Activated CD4-positive, alpha-beta memory T cell treated with anti-CD3 and anti-CD28 coated beads for 36 hours (primary cell): ENCODE measurements at regions of chr5 and their contacts with region 1.

Region 1: GRCh38 chr5:66144074-66144833 is at the start of gene SREK1:
- DNase-seq: peak; percentile 92
- H3K4me3 Mint-ChIP-seq: peak within 1 kb of the TSS; percentile 93
- H3K27ac Mint-ChIP-seq: peak within 1 kb of the TSS; percentile 98
- H3K4me1 Mint-ChIP-seq: peaks cover 51% of the 10 kb centered on the region
- H3K27me3 Mint-ChIP-seq: no peaks in the 10 kb centered on the region
- total RNA-seq, gene SREK1: 50.9 to 54.1 TPM

Region 2: DNA sequence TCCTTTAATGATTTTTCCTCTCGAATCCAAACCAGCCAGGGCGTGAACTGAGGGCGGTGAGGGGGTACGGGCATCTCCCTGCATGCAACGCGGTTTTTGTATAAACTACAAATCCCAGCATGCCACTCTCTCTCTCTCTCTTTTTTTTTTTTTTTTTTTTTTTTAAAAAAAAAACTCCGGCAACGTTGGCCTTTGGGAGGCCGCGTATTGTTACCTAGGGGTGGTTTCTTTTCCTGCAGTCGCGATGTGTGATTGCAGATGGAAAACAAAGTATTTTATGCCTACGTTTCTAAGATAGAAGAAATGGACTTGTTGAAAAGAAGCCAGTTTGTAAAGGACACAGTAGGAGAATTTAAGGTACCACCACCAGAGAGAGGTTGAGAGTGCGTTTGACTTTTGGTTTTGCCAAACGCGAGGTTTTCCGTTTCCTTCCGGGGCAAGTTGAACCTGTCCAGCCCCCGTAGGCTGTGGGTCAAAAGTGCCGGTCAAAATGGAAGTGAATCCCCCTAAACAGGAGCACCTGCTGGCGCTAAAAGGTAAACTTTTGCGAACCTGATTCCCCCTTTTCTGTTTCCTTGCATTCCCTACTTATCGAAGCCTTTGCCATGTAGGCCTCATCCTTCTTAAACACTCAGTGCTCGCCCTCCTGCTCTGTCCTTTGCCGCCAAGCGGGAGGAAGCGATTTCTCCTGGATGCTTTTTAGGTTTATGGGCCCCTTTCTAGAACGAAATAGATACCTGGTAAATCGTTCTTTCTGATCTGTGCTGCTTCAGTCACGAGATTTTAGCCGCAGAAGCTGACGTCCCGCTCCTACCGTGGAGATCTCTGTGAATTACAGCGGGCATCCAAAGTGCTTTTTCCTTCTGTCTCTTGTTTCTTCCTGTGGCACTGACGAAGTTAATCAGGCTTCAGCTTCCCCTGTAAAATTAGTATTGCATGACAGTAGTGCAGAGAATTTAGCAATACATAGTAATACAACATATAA is 519.4 kb before region 1 on chr5 and contains the starts of genes SHLD3 and TRAPPC13:
- CTCF ChIA-PET with region 1: no interaction called
- POLR2A ChIA-PET with region 1: no interaction called
- intact Hi-C with region 1: loop called (anchors 1 kb)
- DNase-seq: peak; percentile 89
- H3K4me3 Mint-ChIP-seq: peak within 1 kb of the TSS; percentile 96
- H3K27ac Mint-ChIP-seq: peak within 1 kb of the TSS; percentile 96
- H3K4me1 Mint-ChIP-seq: peaks cover 39% of the 10 kb centered on the region
- H3K27me3 Mint-ChIP-seq: no peaks in the 10 kb centered on the region
- total RNA-seq, gene SHLD3: 2.6 to 3.1 TPM
- total RNA-seq, gene TRAPPC13: 22.4 to 23.2 TPM

Region 3: DNA sequence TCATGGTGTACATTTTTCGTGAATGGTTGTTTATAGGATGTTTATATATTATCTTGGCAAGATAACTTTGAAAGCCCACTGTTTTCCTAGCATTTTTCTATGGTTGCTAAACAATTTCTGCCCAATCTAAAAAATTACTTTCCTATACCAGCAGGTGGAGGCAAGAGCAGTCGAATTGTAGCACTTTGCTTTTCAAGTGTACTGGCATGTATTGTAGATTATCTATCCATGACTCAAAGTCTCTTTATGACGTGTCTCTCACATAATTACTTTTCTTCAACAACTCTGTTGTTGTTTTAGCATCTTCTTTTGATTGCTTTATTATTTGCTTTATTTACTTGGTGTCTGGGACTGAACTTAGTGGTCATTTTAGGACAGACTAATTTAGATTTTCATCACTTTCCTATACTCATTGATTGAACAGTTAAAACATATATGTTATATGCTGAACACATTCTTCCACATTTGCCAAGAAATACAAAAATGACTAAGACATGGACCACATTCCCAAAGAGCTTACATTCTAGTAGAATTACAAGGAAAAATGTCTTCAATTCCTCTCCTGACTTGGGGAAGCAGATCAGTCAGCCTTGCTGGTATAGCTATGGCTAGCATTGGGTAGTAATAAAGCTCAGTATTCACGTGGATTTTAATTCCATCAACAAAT is 401.6 kb before region 1 on chr5:
- CTCF ChIA-PET with region 1: no interaction called
- POLR2A ChIA-PET with region 1: no interaction called
- intact Hi-C with region 1: loop called (anchors 5 kb)
- DNase-seq: peak; percentile 42
- H3K4me3 Mint-ChIP-seq: no peak overlapping the region
- H3K27ac Mint-ChIP-seq: no peak overlapping the region
- H3K4me1 Mint-ChIP-seq: peaks cover 12% of the 10 kb centered on the region
- H3K27me3 Mint-ChIP-seq: no peaks in the 10 kb centered on the region

Region 4: DNA sequence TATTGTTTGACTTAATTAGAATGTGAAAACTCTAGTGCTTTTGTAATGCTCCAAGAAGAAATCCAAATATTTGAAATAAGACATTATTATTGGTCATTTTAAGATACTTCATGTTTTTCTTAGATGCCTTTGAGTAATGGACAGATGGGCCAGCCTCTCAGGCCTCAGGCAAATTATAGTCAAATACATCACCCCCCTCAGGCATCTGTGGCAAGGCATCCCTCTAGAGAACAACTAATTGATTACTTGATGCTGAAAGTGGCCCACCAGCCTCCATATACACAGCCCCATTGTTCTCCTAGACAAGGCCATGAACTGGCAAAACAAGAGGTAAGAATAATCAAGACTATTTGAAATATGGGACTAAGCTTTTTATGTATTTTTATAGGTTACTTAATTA is 69.4 kb before region 1 on chr5:
- CTCF ChIA-PET with region 1: interaction called, 3 read pairs
- POLR2A ChIA-PET with region 1: no interaction called
- intact Hi-C with region 1: loop called (anchors 5 kb)
- DNase-seq: no peak
- H3K4me3 Mint-ChIP-seq: no peak overlapping the region
- H3K27ac Mint-ChIP-seq: no peak overlapping the region
- H3K4me1 Mint-ChIP-seq: peaks cover 8% of the 10 kb centered on the region
- H3K27me3 Mint-ChIP-seq: no peaks in the 10 kb centered on the region

Region 5: GRCh38 chr5:66454186-66455078 is 310.2 kb after region 1 on chr5:
- CTCF ChIA-PET with region 1: no interaction called
- POLR2A ChIA-PET with region 1: no interaction called
- intact Hi-C with region 1: no loop called
- DNase-seq: no peak
- H3K4me3 Mint-ChIP-seq: no peak overlapping the region
- H3K27ac Mint-ChIP-seq: no peak overlapping the region
- H3K4me1 Mint-ChIP-seq: no peaks in the 10 kb centered on the region
- H3K27me3 Mint-ChIP-seq: peaks cover 5% of the 10 kb centered on the region